ENCODE measurements at regions of chr4 and their contacts with region 1.

Region 1: DNA sequence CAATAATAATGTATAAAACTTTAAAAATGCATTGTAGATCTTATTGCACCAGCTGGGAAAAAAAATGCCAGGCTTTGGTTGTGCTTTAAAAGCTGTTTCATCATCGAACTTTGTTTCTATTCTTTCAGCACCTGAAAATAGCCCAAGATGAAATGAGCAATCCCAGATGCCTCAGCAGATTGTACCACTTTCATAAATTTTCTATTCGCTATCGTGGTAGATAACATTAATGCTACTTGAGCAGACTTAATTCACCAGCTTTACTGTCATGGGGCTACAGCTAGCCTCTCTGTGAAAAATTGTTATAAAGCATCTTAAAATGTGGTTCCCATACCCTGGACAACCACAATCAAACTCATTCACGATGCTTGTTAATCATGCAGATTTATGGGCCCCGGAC is 599.6 kb upstream of the HS3ST1 start:
- DNase-seq: no peak
- H3K4me3 ChIP-seq: no peak overlapping the region
- H3K27ac ChIP-seq: no peak overlapping the region
- H3K4me1 ChIP-seq: no peaks in the 10 kb centered on the region
- H3K27me3 ChIP-seq: no peaks in the 10 kb centered on the region
- CTCF ChIP-seq: no peak
- EP300 ChIP-seq: no peak
- POLR2A ChIP-seq: no peak

Region 2: DNA sequence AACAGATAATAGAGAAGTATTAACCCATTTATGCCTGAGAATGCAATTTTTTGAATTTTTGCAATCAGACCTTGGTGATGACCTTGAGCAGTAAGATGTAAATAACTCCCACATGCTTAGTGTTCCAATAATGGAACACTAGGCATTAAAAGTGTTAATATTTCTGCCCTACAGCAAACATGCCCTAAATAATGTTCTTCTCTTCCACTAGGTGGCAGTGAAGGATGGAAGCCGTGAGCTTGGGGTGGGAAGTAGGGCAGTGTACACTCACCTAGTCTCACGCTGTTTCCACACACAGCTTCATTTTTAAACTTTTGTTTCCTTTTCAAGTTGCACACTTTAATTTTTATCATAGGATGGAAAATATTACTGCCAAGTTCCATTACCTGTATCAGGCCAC is 13.6 kb after region 1 on chr4:
- intact Hi-C with region 1: loop called in 1 of 4 experiments (anchors 2 kb)
- DNase-seq: no peak
- H3K4me3 ChIP-seq: no peak overlapping the region
- H3K27ac ChIP-seq: no peak overlapping the region
- H3K4me1 ChIP-seq: no peaks in the 10 kb centered on the region
- H3K27me3 ChIP-seq: no peaks in the 10 kb centered on the region
- CTCF ChIP-seq: no peak
- EP300 ChIP-seq: no peak
- POLR2A ChIP-seq: no peak

Region 3: GRCh38 chr4:12144051-12144450 is 115.8 kb after region 1 on chr4:
- intact Hi-C with region 1: loop called in 1 of 4 experiments (anchors 5 kb)
- DNase-seq: no peak
- H3K4me3 ChIP-seq: no peak overlapping the region
- H3K27ac ChIP-seq: no peak overlapping the region
- H3K4me1 ChIP-seq: no peaks in the 10 kb centered on the region
- H3K27me3 ChIP-seq: no peaks in the 10 kb centered on the region
- CTCF ChIP-seq: no peak
- EP300 ChIP-seq: no peak
- POLR2A ChIP-seq: no peak